ENCODE measurements at regions of chr17 and their contacts with region 1.

Region 1: DNA sequence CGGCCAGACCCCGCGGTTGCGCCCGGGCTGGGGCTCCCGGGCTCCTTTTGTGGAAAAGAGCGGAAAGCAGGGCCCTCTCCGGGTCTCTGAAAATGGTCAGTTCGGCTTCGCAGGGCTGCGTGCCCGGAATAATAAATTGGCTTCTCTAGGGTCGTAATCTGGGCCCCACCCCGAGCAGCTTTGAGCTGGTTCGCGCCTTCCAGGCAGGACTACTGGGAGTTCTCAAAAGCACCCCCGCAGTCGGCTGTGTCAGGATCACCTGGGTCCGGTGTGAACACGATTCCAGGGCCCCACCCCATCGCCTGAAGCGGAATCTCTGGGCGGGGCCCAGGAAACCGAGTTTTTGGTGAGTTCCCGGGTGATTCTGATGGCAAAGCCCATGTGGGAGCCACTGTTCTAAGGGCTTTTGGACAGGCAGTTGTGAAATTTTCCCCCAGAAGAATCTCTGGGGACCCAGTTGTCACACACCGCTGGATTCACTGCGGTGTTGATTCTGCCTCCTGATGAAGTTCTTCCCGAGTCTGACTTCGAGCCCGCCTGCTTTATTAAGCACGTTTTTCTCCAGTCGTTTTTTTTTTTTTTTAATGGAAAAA is 77.0 kb downstream of the MRC2 start:
- H3K4me3 ChIP-seq: peak overlapping the region; percentile 49
- H3K27ac ChIP-seq: peak overlapping the region; percentile 68; the same call in 1 of the 2 replicates
- H3K4me1 ChIP-seq: peaks cover 3% of the 10 kb centered on the region
- CTCF ChIP-seq: no peak

Region 2: DNA sequence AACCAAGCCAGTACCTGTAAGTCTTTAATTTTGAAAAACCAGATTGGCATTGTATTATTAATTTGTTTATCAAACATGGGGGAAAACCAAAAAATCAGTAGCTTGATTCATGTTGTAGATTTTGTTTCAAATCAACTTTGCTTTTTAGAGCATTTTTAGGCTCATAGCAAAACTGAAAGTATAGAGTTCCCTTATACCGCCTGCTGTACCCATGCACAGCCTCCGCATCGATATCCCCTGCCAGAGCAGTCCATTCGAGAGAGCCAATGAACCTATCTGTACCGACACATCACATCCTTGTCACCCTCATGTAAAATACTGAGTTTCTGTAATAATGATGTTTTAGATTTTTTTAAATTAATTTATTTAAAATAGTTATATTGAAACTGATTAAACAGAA is 93.2 kb before region 1 on chr17:
- CTCF ChIA-PET with region 1: no interaction called
- POLR2A ChIA-PET with region 1: interaction called, 10 read pairs
- H3K4me3 ChIP-seq: no peak overlapping the region
- H3K27ac ChIP-seq: no peak overlapping the region
- H3K4me1 ChIP-seq: no peaks in the 10 kb centered on the region
- CTCF ChIP-seq: no peak

Region 3: DNA sequence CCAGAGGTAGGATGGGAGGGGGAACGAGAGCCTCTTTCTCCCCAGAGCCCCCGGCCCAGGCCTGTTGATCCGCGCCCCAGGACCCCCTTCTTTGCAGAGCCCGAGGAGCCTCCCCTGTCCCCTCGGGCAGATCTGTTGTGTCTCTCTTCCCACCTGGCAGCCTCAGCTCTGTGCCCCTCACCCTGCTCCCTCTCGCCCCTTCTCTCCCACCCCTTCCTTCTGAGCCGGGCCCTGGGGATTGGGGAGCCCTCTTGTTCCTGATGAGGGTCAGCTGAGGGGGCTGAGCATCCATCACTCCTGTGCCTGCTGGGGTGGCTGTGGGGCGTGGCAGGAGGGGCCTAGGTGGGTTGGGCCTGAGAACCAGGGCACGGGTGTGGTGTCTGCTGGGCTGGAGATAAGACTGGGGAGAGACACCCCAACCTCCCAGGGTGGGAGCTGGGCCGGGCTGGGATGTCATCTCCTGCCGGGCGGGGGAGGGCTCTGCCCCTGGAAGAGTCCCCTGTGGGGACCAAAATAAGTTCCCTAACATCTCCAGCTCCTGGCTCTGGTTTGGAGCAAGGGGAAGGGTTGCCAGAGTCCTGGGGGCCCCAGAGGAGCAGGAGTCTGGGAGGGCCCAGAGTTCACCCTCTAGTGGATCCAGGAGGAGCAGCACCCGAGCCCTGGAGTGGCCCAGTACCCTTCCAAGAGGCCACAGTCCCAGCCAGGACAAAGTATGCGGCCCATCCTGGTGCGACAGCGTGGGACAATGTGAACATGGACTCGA is 11.6 kb before region 1 on chr17:
- CTCF ChIA-PET with region 1: no interaction called
- POLR2A ChIA-PET with region 1: no interaction called
- H3K4me3 ChIP-seq: no peak overlapping the region
- H3K27ac ChIP-seq: no peak overlapping the region
- H3K4me1 ChIP-seq: no peaks in the 10 kb centered on the region
- CTCF ChIP-seq: no peak